ENCODE measurements at regions of chr21 and their contacts with region 1.

Region 1: DNA sequence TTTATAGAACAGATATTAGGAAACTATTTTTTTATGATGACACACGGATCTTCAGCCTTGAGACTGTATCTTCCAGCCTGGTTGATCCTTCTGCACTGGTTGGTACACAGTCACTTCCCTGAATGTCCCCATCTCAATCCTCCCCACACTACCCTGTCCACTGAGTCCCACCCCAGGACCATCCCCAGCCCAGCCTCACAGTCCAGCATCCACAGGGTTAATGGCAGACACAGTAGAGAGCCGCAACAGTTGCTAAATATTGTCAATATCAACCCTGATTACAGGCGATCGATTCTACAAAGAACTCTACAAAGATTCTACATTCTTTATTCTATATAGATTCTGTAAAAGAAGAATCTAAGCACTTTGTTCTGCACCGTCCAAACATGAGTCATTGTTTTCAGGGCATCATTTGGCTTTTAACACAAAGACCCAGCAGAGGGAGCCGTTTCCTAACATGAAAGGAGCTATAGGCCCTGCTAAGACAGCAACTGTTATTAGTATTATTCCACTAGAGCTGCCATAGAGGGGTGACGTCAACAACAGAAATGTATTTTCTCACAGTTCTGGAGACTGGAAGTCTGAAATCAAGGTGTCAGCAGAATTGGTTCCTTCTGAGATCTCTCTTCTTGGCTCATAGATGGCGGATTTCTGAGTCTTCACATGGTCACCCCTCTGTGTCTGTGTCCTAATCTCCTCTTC is 30.1 kb upstream of the IFNAR2 start:
- DNase-seq: peak; percentile 92
- H3K4me3 ChIP-seq: no peak overlapping the region
- H3K27ac ChIP-seq: no peak overlapping the region
- H3K4me1 ChIP-seq: no peaks in the 10 kb centered on the region
- H3K27me3 ChIP-seq: no peaks in the 10 kb centered on the region
- CTCF ChIP-seq: peak; percentile 81

Region 2: DNA sequence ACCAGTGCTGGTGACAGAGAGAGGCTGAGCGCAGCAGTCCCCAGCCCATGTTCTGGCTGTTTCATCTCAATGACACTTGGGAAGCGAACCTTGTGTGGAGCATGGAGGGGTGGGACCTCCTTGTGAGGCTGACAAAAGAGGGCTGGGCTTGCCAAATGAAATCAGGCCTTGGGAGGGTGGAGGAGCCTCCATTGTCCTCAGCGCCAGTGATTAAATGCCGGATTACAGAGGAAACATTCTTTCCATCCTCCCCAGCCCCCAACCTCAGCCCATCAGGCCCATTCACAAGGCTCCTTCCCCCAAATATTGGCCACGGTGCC is 364.8 kb before region 1 on chr21:
- CTCF ChIA-PET with region 1: interaction called, 4 read pairs
- POLR2A ChIA-PET with region 1: no interaction called
- intact Hi-C with region 1: loop called (anchors 2 kb)
- DNase-seq: no peak
- H3K4me3 ChIP-seq: no peak overlapping the region
- H3K27ac ChIP-seq: no peak overlapping the region
- H3K4me1 ChIP-seq: no peaks in the 10 kb centered on the region
- H3K27me3 ChIP-seq: peaks cover 59% of the 10 kb centered on the region
- CTCF ChIP-seq: no peak

Region 3: DNA sequence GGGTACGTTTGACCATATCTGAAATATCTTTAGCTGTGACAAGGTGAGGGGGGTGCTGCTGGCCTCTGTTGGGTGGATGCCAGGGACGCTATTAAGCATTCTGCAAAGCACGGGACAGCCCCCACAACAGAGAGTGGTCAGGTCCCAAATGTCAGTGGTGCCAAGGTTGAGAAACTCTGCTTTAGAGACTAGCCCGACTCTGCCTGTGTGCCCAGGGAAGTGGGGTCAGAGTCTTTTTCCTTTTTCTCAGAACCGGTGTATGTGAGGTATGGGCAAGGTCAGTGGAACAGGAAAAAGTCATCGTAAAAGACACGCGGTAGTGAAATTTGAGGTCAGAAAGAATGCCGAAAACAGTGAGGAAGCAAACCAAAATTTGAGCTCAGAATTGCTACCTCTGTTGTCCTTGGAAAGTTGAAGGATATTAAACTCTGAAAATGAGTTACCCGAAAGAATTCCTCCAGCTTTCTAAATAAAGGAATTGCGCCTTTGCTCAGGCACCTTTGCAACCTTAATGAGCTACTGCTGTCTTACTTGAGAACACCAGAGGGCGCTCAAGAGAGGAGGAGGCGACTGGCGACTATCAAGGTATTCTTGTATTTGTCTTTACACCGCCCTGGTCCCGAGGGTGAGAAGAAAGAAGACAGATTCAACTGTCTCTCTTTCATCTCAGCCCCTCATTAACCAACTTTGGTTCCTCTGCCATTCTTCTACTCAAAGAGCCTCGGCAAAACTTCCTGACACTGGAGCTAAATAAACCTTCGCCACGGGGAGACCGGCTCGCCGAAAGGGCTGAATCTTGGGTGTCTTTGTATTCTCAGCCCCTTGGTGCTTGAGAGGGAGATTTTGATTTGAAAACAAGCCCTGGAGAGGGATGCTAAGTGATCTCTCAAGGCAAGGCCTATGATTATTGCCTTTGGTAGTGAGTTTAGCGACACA is 259.3 kb before region 1 on chr21:
- CTCF ChIA-PET with region 1: interaction called, 12 read pairs
- POLR2A ChIA-PET with region 1: no interaction called
- intact Hi-C with region 1: loop called (anchors 2 kb)
- DNase-seq: peak; percentile 68
- H3K4me3 ChIP-seq: no peak overlapping the region
- H3K27ac ChIP-seq: no peak overlapping the region
- H3K4me1 ChIP-seq: no peaks in the 10 kb centered on the region
- H3K27me3 ChIP-seq: peaks cover 23% of the 10 kb centered on the region
- CTCF ChIP-seq: peak; percentile 88

Region 4: DNA sequence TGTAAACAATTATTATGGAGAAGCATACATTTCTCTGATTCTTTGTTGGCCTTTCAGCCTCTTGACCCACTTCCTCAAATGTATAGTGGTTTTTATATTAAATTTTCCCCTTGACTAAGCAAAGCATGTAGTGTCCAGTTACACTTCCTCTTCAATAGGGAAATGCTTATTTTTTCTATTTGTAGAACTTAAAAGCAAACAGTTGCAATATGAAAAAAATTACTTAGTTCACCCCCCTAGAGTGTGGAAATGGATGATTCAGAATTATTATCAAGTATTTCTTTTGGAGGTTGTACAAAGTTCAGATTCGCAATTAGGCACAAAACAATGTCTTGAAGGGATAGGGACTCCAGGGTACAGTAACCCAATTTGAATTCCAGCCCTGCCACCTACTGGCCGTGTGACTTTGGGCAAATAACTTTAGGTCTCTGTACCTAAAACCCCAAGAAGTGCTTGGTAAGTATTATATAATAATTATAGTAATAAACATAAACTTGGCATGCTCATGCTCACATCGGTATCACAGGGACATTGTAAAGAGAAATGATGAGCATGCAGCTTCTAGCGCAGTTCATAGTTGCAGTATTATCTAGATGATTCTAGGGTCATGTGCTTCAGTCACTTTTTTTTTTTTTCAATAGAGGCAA is 174.9 kb after region 1 on chr21:
- CTCF ChIA-PET with region 1: no interaction called
- POLR2A ChIA-PET with region 1: no interaction called
- intact Hi-C with region 1: loop called (anchors 1 kb)
- DNase-seq: peak; percentile 61
- H3K4me3 ChIP-seq: no peak overlapping the region
- H3K27ac ChIP-seq: no peak overlapping the region
- H3K4me1 ChIP-seq: peaks cover 6% of the 10 kb centered on the region
- H3K27me3 ChIP-seq: no peaks in the 10 kb centered on the region
- CTCF ChIP-seq: peak; percentile 76

Region 5: DNA sequence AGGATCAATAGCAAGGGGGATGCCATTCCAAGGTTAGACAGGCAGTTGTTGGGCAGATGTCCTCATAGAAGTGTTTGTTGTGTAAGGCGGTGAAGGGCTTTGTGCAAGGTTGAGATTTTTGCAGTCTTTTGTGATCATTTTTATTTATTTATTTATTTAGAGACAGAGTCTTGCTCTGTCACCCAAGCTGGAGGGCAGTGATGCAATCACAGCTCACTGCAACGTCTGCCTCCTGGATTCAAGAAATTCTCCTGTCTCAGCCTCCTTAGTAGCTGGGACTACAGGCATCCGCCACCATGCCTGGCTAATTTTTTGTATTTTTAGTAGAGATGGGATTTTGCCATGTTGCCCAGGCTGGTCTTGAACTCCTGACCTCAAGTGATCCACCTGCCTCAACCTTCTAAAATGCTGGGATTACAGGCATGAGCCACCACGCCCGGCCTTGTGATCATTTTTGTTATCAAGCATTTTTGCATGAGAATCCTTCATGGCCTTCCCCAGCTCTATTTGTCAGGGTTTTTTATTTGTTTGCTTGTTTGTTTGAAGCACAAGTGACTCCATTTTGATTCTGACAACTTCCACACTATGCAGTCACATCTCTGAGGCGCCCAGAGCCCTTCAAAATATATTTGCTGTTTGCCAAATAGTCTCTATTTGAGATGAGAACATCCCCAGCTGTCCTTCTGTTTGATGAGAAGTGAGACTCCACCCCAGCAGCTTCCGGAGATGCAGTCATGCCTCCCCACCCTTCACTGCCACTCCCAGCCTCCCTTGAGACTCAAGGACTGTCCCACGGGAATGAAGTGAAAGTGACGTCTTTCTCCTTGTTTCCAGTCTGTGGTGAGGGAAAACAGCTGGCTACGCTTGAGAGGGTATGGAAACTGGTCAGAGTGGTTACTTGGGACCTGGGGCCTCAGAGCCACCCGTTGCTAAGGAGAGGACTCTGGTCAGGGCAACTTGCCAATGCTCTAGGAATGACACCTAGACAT is 242.1 kb after region 1 on chr21:
- CTCF ChIA-PET with region 1: interaction called, 35 read pairs
- POLR2A ChIA-PET with region 1: no interaction called
- intact Hi-C with region 1: loop called (anchors 1 kb)
- DNase-seq: peak; percentile 91
- H3K4me3 ChIP-seq: no peak overlapping the region
- H3K27ac ChIP-seq: no peak overlapping the region
- H3K4me1 ChIP-seq: peaks cover 11% of the 10 kb centered on the region
- H3K27me3 ChIP-seq: no peaks in the 10 kb centered on the region
- CTCF ChIP-seq: no peak

Measured in A673 (cell line).